ENCODE measurements at regions of chr12 and their contacts with region 1.

Region 1: DNA sequence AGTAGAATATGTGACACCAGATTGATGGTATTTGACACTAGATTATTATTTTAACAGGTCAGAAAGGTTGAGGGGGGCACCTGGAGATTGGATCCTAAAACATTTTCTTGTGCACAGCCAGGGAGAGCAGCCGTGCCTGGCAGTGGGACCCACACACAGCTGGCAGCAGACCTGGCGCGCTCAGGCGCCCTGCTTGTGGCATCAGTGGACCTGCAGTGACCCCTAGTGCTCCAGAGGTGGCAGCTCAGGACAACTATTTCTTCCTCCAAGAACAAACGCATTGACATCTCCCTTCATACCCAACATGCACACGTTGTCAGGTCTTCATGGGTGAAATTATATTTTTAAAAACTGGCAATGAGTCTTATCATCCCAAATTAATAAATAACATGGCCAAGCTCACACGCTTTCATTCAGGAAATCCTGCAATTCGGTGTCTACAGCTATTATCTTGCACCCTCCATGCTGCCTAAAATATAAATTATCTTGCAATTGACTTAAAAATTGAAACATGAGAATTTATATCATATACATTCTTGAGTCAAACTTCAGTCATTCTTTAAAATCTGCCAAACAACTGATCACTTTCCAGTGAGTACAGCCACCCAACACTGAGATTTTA is 7.7 kb upstream of the TMEM132D start:
- DNase-seq: peak; percentile 12 to 22
- ATAC-seq: peak in 5 of 8 donors; percentile 58 to 84 (median 73)
- H3K4me3 ChIP-seq: no peak overlapping the region
- H3K27ac ChIP-seq: no peak overlapping the region
- H3K4me1 ChIP-seq: no peaks in the 10 kb centered on the region
- H3K27me3 ChIP-seq: peaks cover 0 to 61% (median 23%) of the 10 kb centered on the region in 7 donors
- CTCF ChIP-seq: peak; percentile 18 to 71 (median 61)

Region 2: DNA sequence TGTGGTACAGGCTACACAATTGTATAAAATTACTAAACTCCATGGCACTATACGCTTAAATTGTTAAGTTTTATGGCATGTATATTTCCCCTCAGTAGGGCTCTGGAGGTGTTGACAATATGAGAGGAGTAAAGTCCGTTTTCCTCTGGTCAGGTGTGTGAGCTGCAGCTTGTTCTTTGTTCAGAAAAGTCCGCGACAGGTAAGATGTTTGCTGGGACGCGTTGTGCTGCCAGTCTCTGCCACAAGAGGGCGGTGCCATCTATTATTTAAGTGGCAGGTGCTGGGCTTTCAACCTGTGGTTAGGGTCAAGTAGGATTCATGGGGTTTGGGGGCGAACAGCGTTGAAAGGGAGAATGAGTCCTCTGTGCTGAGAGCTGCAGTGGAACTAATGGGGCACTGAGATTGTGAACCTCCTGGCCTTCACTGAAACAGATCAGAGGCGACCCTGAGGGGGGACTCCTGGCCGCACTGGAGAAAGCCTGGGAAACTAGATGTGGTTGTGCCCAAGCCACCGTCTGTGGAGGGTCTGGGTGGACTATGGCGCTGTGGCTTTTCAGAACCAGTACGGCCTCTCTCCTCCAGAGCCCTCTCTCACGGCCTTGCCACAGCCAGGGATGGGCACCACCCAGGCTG is 1266.8 kb before region 1 on chr12:
- intact Hi-C with region 1: loop called in 3 of 10 experiments (anchors 10 kb)
- DNase-seq: no peak
- ATAC-seq: no peak
- H3K4me3 ChIP-seq: no peak overlapping the region
- H3K27ac ChIP-seq: no peak overlapping the region
- H3K4me1 ChIP-seq: no peaks in the 10 kb centered on the region
- H3K27me3 ChIP-seq: no peaks in the 10 kb centered on the region
- CTCF ChIP-seq: peak in 8 of 9 donors; percentile 19 to 65 (median 52)

Region 3: DNA sequence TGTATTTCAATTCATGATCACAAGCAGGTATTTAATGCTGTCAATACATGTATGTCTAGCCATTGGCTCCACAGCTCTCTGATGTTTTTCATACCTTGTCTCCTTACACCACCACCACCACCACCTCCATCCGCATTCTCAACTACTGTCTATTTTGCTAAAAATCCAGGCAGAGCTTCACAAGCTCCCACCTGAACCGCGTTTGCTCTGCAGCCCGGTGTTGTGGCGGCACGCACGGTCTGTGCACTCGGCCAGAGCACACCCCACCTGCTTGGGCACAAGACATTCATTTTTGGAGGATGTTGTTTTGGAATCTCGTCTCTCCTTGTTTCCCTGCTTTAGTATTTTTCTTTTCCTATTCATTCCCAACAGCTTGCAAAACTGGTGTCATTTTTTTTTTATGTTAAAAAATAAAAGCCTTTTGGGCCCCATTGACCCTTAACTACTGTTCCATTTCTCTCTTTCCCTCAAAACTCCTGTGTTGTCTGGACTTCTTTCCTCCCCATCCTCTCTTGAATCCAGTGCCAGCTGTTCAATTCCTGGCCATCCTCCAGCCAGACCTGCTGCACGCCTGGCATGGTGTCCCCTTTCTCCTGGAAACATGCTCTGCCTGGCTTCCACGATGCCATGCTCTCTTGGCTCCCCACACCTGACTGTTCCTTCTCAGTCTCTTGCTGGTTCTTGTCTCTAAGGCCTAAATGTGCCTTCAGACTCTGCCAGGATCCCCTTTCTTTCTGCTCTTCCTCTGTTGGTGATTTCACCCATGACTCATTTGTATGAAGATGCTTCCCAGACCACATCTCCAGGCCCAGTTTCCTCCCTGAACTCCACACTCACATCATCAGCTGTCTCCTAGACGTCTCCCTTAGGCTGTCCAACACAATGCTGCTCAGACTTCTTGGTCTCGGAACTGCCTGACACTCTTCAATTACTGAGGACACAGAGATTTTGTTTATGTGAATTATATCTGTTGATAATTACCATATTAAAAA is 464.1 kb after region 1 on chr12:
- intact Hi-C with region 1: no loop called
- DNase-seq: no peak
- ATAC-seq: no peak
- H3K4me3 ChIP-seq: no peak overlapping the region
- H3K27ac ChIP-seq: no peak overlapping the region
- H3K4me1 ChIP-seq: no peaks in the 10 kb centered on the region
- H3K27me3 ChIP-seq: peaks cover 0 to 47% (median 14%) of the 10 kb centered on the region in 7 donors
- CTCF ChIP-seq: no peak

Measured in heart right ventricle (tissue), 16 donors.